ENCODE measurements at regions of chr3 and their contacts with region 1.

Region 1: DNA sequence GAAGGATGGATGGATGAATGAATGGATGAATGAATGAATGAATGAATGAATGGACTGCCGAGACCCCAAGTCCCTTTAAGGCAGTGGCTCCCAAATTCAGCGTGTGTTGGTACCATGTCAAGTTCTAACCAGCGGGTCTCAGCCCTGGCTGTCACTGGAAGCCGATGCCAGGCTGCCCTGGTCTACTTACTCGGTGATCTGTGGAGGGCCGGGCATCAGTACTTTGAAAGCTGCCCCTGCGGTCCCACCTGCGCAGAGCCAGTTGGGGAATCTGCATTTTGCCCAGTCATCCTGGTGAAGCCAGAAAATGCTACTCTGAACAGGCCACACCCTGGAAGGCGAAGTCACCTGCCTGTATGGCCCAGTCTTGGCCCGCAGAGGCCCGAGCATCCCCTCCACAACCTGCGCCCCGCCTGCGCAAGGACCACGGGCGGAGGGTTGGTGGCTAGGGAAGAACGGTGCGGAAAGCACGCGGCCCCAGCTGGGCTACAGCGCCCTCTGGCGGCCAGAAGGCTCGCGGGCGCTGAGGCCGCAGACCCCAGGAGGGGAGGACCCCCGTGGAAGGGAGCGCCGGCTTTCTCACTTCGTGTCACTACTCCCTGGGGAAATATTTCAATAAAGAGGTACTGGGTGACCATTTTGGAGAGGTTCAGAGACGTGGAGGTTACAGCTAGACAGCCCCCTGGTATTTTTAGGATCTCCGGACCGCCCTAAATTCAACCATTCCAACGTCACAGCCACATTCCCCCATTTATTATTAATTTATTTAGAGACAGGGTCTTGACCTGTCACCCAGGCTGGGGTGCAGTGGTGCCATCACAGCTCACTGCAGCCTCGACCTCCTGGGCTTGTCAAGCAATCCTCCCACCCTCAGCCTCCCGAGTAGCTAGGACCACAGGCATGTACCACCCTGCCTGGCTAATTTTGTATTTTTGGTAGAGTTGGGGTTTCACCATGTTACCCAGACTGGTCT is 34.9 kb downstream of the PRKCD start:
- DNase-seq: no peak
- H3K4me3 ChIP-seq: no peak overlapping the region
- H3K27me3 ChIP-seq: no peaks in the 10 kb centered on the region
- CTCF ChIP-seq: peak; percentile 100

Region 2: GRCh38 chr3:53114011-53114400 is 81.9 kb before region 1 on chr3:
- CTCF ChIA-PET with region 1: interaction called, 89 read pairs
- POLR2A ChIA-PET with region 1: no interaction called
- DNase-seq: no peak
- H3K4me3 ChIP-seq: no peak overlapping the region
- H3K27me3 ChIP-seq: no peaks in the 10 kb centered on the region
- CTCF ChIP-seq: peak; percentile 93

Region 3: DNA sequence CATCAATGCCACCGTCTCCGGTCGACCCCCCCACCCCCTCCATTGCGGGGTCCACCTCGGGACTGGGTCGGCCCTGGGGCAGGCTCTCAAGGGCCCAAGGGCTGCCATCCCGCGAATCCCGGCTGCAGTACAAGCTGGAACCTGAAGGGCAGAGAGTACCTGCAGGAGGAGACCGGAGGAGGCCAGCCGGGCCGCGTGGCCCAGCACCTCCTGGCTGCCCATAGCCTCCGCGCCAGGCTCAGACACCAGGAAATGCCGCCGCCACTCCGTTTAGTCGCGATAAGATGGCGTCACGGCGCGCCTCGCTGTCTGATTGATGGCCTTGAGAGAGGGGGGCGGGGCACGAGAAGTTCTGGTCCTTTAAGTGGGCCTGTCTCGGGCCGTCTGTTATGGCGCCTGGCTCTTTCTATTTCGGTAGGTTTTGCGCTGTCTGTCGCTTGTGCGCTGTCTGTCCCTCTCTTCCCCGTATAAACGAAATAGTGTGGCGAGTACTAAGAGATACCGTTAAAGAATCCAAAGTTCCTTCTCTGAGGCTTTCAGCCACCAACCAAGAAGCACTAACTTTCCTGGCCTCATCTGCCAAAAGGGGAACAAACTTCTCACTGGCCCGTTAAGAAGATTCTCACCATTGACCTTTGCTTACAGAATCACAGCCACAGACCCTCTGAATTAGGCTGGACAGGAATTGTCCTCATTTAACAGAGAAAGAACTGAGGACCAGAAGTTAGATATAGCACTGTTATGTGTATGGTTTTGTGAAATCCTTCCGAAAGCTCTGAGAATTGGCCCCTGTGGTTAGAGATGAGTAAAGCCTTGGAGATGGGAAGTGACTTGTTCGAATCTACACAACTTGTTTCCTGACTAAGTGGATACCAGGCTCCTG is 65.5 kb before region 1 on chr3 and contains the start of gene RFT1:
- CTCF ChIA-PET with region 1: interaction called, 206 read pairs
- POLR2A ChIA-PET with region 1: no interaction called
- DNase-seq: peak; percentile 64
- H3K4me3 ChIP-seq: peak within 1 kb of the TSS; percentile 93
- H3K27me3 ChIP-seq: no peaks in the 10 kb centered on the region
- CTCF ChIP-seq: peak; percentile 27
- polyA plus RNA-seq, gene RFT1: 27.9 and 33.5 TPM in 2 replicates

Region 4: GRCh38 chr3:53160660-53161449 is 35.0 kb before region 1 on chr3 and contains the start of gene PRKCD:
- CTCF ChIA-PET with region 1: interaction called, 14 read pairs
- POLR2A ChIA-PET with region 1: interaction called, 3 read pairs
- DNase-seq: no peak
- H3K4me3 ChIP-seq: peak within 1 kb of the TSS; percentile 94
- H3K27me3 ChIP-seq: peaks cover 9% of the 10 kb centered on the region
- CTCF ChIP-seq: peak; percentile 58
- polyA plus RNA-seq, gene PRKCD: 24.2 and 33.5 TPM in 2 replicates

Region 5: DNA sequence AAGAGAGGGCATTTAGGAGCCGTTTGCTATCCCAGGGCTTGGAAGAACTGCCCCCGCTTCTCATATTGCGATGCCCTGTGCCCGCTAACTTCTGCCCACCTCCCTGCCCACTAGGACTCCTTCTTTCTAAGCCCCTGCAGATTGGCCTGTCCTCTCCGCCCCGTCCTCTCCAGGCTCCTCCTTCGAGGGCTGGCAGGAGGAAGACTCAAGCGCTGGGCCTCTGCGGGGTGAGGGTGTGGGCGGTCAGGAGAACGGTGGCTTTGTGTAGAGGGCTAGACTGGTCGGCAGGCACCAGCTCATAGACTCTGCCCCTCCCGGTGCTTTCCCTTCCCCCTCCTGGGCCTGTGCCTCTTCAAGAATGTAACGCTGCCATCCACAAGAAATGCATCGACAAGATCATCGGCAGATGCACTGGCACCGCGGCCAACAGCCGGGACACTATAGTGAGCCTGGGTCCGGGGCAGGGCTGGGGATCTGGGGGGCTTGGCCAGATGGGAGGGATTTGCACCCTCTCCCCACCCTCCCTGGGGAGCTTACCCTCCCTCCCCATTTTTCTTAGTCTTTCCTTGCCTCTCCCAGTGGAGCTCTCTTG is 13.0 kb before region 1 on chr3:
- CTCF ChIA-PET with region 1: interaction called, 20 read pairs
- POLR2A ChIA-PET with region 1: no interaction called
- DNase-seq: no peak
- H3K4me3 ChIP-seq: no peak overlapping the region
- H3K27me3 ChIP-seq: no peaks in the 10 kb centered on the region
- CTCF ChIP-seq: no peak

Region 6: DNA sequence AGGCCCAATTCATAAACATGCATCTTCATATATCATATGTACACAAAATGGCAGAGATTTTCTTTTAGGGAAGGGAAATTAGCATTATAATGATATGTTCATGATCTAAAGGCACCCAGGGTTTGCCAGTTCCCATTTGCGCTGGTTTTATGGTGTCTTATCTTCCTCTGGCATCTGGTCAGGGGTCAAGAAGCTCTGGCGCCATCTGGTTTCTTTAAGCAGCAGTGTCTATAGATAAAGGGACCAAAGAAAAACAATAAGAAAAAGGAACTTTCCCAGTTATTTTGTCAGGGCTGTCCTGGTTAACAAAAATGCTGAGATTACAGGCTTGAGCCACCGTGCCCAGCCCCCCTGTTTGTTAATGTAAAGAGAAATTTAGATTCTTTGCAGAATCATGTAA is 154.8 kb after region 1 on chr3:
- CTCF ChIA-PET with region 1: no interaction called
- POLR2A ChIA-PET with region 1: no interaction called
- DNase-seq: no peak
- H3K4me3 ChIP-seq: no peak overlapping the region
- H3K27me3 ChIP-seq: no peaks in the 10 kb centered on the region
- CTCF ChIP-seq: peak; percentile 40; the same call in 1 of the 2 replicates